Calu3 (cell line): ENCODE measurements at regions of chr7 and their contacts with region 1.

Region 1: GRCh38 chr7:111855161-111855856 is 293.0 kb upstream of the IMMP2L start:
- DNase-seq: peak; percentile 27
- H3K4me3 Mint-ChIP-seq: no peak overlapping the region
- H3K27ac Mint-ChIP-seq: no peak overlapping the region
- H3K4me1 Mint-ChIP-seq: peaks cover 14% of the 10 kb centered on the region
- H3K27me3 Mint-ChIP-seq: no peaks in the 10 kb centered on the region
- CTCF ChIP-seq: peak; percentile 26

Region 2: DNA sequence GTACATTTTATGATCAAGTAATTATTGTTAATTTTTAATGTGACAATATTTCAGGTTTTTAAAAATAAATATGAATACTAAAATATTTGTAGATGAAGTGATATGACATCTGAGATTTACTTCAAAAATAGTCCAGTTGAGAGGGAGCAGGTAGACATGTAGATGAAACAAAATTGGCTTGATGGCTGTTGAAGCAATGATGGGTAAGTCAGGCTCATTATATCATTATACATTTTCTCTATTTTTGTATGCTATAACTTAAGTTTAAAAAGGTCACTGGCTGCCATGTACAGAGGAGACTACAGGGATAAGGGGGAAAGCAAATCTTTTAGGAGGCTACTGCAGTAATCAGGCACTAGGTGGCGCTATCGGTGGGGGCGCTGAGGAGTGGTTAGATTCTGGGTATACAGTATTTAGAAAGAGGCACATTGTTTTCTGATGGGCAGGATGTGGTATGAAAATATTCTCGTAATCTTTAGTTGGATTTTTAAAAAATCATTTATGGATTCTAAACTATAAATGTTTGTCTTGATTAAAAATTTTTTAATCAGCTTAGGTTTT is 103.2 kb before region 1 on chr7:
- CTCF ChIA-PET with region 1: no interaction called
- intact Hi-C with region 1: loop called (anchors 1 kb)
- DNase-seq: peak; percentile 72
- H3K4me3 Mint-ChIP-seq: no peak overlapping the region
- H3K27ac Mint-ChIP-seq: no peak overlapping the region
- H3K4me1 Mint-ChIP-seq: no peaks in the 10 kb centered on the region
- H3K27me3 Mint-ChIP-seq: peaks cover 12% of the 10 kb centered on the region
- CTCF ChIP-seq: peak; percentile 65

Region 3: DNA sequence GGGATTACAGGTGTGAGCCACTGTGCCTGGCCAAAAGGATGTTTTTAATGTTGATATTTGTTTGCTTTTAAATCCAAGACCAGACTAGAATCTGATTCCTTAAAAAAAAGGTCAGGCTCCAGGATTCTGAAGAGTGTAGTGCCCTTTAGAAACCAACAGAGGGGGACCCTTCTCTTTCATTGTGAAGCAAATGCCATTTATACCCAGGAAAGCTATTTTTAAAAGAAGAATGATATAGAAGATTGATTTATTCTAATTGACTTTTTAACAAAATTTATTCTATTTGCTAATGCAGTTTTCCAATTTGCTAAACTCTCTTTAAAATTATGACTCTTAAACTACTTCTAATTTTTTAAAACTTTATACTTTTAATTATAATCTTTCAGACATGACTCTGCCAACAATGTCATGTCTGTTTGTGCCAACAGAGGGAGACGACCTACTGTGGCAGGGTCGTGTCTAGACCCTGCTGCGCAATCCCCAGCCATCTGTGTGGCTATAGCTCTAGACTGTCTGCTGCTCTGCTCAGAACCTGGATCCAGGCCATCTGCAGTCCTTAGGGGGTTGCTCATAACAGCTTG is 92.0 kb before region 1 on chr7:
- CTCF ChIA-PET with region 1: interaction called, 22 read pairs
- intact Hi-C with region 1: loop called (anchors 1 kb)
- DNase-seq: no peak
- H3K4me3 Mint-ChIP-seq: no peak overlapping the region
- H3K27ac Mint-ChIP-seq: no peak overlapping the region
- H3K4me1 Mint-ChIP-seq: no peaks in the 10 kb centered on the region
- H3K27me3 Mint-ChIP-seq: no peaks in the 10 kb centered on the region
- CTCF ChIP-seq: peak; percentile 31